ENCODE measurements at regions of chr14 and their contacts with region 1.

Region 1: DNA sequence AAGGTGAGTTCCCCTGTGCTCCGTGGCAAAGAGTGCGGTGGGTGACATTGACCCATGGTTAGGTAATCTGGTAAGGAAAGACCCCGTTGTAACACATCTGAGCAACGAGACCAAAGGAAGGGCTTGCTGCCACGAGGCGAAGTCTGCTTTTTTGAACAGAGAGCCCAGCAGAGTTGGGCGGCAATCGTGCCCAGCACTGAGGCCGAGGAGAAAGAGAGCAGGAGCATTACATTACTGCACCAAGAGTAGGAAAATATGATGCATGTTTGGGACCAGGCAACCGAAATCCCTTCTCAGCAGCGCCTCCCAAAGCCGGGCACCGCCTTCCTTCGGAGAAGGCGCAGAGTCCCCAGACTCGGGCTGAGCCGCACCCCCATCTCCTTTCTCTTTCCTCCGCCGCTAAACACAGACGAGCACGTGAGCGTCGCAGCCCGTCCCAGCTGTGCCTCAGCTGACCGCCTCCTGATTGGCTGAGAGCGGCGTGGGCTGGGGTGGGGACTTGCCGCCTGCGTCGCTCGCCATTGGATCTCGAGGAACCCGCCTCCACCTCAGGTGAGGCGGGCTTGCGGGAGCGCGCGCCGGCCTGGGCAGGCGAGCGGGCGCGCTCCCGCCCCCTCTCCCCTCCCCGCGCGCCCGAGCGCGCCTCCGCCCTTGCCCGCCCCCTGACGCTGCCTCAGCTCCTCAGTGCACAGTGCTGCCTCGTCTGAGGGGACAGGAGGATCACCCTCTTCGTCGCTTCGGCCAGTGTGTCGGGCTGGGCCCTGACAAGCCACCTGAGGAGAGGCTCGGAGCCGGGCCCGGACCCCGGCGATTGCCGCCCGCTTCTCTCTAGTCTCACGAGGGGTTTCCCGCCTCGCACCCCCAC is at the start of gene HIF1A:
- DNase-seq: peak; percentile 96
- H3K4me3 Mint-ChIP-seq: peak within 1 kb of the TSS; percentile 89
- H3K27ac Mint-ChIP-seq: peak within 1 kb of the TSS; percentile 93
- H3K4me1 Mint-ChIP-seq: peaks cover 2% of the 10 kb centered on the region
- H3K27me3 Mint-ChIP-seq: no peaks in the 10 kb centered on the region
- CTCF ChIP-seq: no peak
- total RNA-seq, gene HIF1A: 213 and 229 TPM in 2 replicates

Region 2: GRCh38 chr14:61475316-61475715 is 219.7 kb before region 1 on chr14:
- CTCF ChIA-PET with region 1: no interaction called
- intact Hi-C with region 1: loop called (anchors 2 kb)
- DNase-seq: peak; percentile 41
- H3K4me3 Mint-ChIP-seq: no peak overlapping the region
- H3K27ac Mint-ChIP-seq: peak overlapping the region; percentile 61
- H3K4me1 Mint-ChIP-seq: peaks cover 86% of the 10 kb centered on the region
- H3K27me3 Mint-ChIP-seq: no peaks in the 10 kb centered on the region
- CTCF ChIP-seq: peak; percentile 70

Region 3: GRCh38 chr14:61750708-61751474 is 55.8 kb after region 1 on chr14:
- CTCF ChIA-PET with region 1: no interaction called
- intact Hi-C with region 1: loop called (anchors 5 kb)
- DNase-seq: peak; percentile 89
- H3K4me3 Mint-ChIP-seq: peak overlapping the region; percentile 74
- H3K27ac Mint-ChIP-seq: peak overlapping the region; percentile 70
- H3K4me1 Mint-ChIP-seq: peaks cover 40% of the 10 kb centered on the region
- H3K27me3 Mint-ChIP-seq: no peaks in the 10 kb centered on the region
- CTCF ChIP-seq: no peak

Measured in Calu3 (cell line).